Head of caudate nucleus (tissue), 42 donors: ENCODE measurements at regions of chr3 and their contacts with region 1.

Region 1: DNA sequence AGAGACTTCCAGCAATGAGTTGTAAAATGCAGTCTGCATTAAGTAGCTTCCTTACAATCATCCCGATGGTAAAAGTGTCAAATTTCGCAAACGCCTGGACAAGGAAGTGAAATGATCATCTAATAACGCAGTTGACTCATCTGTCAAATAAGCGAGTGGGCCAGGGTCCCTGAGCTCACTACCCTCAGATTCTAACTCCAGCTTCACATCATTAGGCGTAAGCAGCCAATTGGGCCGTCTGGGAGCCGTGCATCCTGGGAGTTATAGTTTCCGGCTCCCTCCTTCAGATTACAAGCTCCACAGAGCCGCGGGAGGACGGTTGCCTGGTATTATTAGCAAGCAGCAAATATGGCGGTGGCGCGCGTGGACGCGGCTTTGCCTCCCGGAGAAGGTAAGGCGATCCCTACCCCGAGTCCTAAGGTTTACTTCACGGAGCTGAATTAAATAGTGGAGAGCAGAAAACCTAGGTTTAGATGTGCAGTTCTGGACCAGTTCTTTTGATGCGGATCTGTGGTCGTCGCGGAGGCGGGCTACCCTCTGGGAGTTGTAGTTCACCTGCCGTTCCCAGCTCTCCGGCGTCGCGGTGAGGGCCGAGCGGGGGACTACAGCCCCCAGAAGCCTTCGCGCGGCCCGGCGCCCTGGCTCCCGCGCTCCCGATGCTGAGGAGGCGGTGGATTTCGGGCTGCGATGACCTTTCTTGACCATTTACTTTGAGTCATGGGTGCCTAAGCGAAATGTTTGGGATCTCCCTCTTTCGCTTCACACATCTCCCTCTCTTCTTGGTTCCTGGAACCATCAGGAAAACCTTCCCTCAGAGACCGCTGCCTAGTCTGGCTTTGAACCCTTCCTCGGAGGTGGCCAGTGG is at the start of gene CEP97:
- DNase-seq: peak; percentile 86 to 98 (median 94)

Region 2: DNA sequence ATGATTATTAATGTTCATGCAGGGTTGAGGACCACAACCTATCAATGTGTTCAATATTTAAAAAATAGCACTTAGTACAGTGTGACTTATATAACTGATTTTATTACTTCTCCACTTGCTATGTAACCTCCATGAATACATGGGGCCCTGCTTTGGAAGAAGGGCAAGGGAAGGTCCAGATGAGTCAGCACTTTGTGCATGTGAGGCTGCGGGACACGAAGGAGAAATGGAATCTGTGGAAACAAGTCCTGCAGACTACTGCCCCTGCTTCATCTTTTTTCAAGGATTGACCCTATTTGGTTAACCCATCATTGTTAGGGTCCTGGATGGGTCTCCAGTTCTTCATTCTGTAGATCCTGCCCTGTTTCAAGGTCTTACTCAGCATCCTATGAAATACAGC is 56.1 kb after region 1 on chr3:
- intact Hi-C with region 1: loop called (anchors 10 kb)
- DNase-seq: peak in 31 of 42 donors; percentile 25 to 78 (median 50)